OCI-LY7 (cell line): ENCODE measurements at regions of chr18 and their contacts with region 1.

Region 1: GRCh38 chr18:9433671-9434121 is 41.6 kb upstream of the RALBP1 start:
- DNase-seq: no peak
- H3K4me3 ChIP-seq: no peak overlapping the region
- H3K27ac ChIP-seq: no peak overlapping the region
- H3K4me1 ChIP-seq: no peaks in the 10 kb centered on the region
- CTCF ChIP-seq: no peak

Region 2: DNA sequence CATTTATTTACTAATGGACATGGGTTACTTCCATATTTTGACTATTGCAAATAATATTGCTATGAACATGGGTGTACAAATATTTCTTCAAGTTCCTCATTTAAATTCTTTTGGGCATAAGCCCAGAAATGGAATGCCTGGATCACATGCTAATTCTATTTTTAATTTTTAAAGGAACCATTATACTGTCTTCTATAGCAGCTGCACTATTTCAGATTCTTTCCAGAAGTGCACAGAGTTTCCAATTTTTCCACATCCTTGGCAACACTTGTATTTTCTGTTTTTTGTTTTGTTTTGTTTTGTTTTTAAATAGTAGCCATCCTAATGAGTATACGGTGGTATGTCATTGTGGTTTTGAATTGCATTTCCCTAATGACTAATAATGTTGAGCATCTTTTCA is 33.1 kb after region 1 on chr18:
- CTCF ChIA-PET with region 1: no interaction called
- POLR2A ChIA-PET with region 1: interaction called, 11 read pairs
- intact Hi-C with region 1: no loop called
- DNase-seq: no peak
- H3K4me3 ChIP-seq: no peak overlapping the region
- H3K27ac ChIP-seq: no peak overlapping the region
- H3K4me1 ChIP-seq: no peaks in the 10 kb centered on the region
- CTCF ChIP-seq: no peak